ENCODE measurements at regions of chr18 and their contacts with region 1.

Region 1: GRCh38 chr18:4544134-4544533 is 89.0 kb upstream of the DLGAP1 start:
- H3K4me3 Mint-ChIP-seq: no peak overlapping the region
- H3K27ac Mint-ChIP-seq: no peak overlapping the region
- H3K4me1 Mint-ChIP-seq: no peaks in the 10 kb centered on the region
- H3K27me3 Mint-ChIP-seq: no peaks in the 10 kb centered on the region

Region 2: DNA sequence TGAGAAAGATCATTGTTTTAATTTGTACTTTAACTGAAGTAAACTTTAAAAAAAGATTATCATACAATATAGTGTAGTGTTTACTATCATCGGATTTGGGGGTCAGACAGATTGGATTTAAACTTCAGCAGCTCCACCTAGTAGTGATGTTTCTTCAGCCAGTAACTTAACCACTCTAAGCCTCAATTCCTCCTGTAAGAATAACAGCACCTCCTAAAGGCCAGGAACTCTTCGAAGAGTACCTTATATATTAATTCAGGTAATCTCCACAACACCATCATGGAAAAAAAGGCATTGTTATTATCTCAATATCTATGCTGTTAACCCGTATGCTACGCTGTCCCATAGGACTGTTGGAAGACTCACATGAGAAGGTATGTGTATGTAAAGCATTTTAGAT is 20.0 kb before region 1 on chr18:
- intact Hi-C with region 1: loop called (anchors 2 kb)
- H3K4me3 Mint-ChIP-seq: no peak overlapping the region
- H3K27ac Mint-ChIP-seq: no peak overlapping the region
- H3K4me1 Mint-ChIP-seq: no peaks in the 10 kb centered on the region
- H3K27me3 Mint-ChIP-seq: no peaks in the 10 kb centered on the region

Region 3: GRCh38 chr18:5628512-5629255 is 1084.5 kb after region 1 on chr18:
- intact Hi-C with region 1: no loop called
- H3K4me3 Mint-ChIP-seq: peak overlapping the region; percentile 79
- H3K27ac Mint-ChIP-seq: peak overlapping the region; percentile 53
- H3K4me1 Mint-ChIP-seq: peaks cover 5% of the 10 kb centered on the region
- H3K27me3 Mint-ChIP-seq: peaks cover 45% of the 10 kb centered on the region

Measured in dendritic cell treated with granulocyte-macrophage colony-stimulating factor and Interleukin-4, amounts not matched to agents 40 ng/mL and 50 ng/mL, for 4 days (primary cell).